CD4-positive, alpha-beta memory T cell (primary cell): ENCODE measurements at regions of chrX and their contacts with region 1.

Region 1: DNA sequence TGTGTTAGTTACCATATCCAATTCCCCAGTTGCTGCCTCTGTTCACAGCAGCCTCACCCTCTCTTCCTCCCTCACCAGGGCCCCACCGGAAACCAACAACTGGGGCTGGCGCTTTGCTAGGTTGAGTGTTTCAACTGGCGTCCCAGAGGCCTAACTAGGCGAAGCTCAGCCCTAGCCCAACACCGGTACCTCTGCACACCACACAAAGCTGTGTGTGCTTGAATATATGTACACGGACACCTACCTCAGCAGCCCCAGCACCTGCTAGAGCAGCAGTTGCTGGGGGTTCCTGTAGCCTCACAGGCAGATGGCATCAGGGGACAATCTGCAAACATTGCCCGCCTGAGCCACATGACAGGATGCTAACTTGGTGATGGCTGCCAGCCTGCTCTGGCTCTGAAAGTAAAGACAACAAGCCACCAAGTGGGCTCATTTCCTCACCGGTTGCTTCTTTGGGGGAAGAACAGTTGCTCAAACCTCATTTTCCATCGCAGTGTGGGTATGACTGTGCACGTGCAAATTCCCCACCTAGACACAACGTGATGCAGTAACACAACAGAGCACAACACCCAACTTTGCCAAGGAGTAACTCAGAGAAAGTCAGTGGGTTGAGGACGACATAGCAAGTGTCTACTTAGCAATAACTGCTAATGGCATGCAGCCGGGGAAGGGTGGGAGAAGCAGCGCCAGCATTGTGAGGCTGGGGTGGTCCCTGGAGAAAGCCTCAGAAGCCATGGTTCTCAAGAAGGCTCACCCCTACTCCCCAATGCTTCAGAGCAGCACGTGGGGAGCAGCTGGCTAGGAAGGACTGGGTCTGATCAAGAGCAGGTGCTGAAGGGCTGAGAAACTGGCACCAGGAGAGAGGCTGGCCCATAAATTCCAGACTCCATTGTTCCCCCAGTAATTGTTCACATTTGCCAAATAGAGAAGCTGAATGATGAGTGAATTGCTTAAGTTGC is 139.5 kb downstream of the SH3KBP1 start:
- DNase-seq: peak; percentile 83 to 89 (median 85)
- H3K4me3 ChIP-seq: peak overlapping the region in 1 of 2 donors; percentile 4
- H3K4me3 Mint-ChIP-seq: peak overlapping the region; percentile 28 to 88 (median 68)
- H3K27ac ChIP-seq: peak overlapping the region; percentile 60
- H3K27ac Mint-ChIP-seq: peak overlapping the region; percentile 85 to 99 (median 97)
- H3K4me1 ChIP-seq: peaks cover 100% of the 10 kb centered on the region
- H3K4me1 Mint-ChIP-seq: peaks cover 63 to 99% (median 86%) of the 10 kb centered on the region in 4 donors
- H3K27me3 ChIP-seq: no peaks in the 10 kb centered on the region
- H3K27me3 Mint-ChIP-seq: no peaks in the 10 kb centered on the region

Region 2: DNA sequence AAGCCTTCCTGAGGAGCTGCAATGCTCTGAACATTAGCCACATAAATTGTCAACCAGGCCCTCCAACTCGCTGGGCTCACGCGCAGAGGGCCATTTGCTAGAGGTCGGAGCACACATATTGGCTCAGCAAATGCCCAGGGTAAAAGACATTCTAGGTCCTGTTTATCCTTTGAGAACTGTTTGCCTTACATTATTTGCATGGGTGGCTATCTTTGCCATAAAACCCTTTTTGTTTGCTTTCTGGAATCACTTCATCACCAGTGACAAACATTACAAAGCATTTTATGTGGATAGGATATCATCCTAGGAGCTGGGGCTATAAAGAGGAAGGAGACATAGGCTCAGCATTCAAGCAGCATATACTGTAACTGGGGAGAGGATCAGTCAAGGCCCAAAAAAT is 1737.7 kb before region 1 on chrX:
- CTCF ChIA-PET with region 1: no interaction called
- POLR2A ChIA-PET with region 1: no interaction called
- intact Hi-C with region 1: no loop called
- DNase-seq: no peak
- H3K4me3 ChIP-seq: no peak overlapping the region
- H3K4me3 Mint-ChIP-seq: no peak overlapping the region
- H3K27ac ChIP-seq: no peak overlapping the region
- H3K27ac Mint-ChIP-seq: no peak overlapping the region
- H3K4me1 ChIP-seq: no peaks in the 10 kb centered on the region
- H3K4me1 Mint-ChIP-seq: no peaks in the 10 kb centered on the region
- H3K27me3 ChIP-seq: no peaks in the 10 kb centered on the region
- H3K27me3 Mint-ChIP-seq: peaks cover 0 to 1% of the 10 kb centered on the region in 2 donors

Region 3: DNA sequence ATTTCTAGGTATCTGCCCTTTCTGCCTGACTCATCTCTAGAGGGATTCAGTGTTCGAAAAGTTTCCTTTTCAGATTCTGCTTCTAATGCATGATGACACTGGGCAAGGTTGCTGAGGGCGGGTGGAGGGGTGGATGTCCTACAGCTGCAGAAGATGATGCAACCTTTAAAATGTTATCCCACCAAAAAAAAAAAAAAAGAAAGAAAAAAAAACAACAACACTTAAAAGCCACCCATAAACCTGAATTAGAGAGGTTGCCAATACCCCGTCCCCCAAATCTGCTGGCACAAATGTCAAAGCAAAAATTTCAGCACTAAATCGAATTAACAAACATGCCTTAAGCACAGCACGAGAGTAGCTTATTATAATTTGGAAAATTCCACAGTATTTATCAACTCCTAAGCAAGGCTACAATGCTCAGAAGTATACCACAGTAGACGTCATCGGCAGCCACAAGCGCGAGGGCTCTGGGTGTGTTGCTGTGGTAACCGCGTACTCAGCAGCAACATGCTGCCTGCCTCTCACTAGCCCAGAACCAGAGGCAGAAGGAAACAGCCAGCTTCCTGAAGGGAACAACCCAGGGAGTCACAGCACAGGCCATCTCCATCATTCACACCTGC is 65.1 kb before region 1 on chrX:
- CTCF ChIA-PET with region 1: no interaction called
- POLR2A ChIA-PET with region 1: interaction called, 7 read pairs
- intact Hi-C with region 1: loop called (anchors 5 kb)
- DNase-seq: peak; percentile 83 to 92 (median 85)
- H3K4me3 ChIP-seq: no peak overlapping the region
- H3K4me3 Mint-ChIP-seq: peak overlapping the region; percentile 12 to 75 (median 59)
- H3K27ac ChIP-seq: peak overlapping the region; percentile 92
- H3K27ac Mint-ChIP-seq: peak overlapping the region; percentile 95 to 100 (median 98)
- H3K4me1 ChIP-seq: peaks cover 89% of the 10 kb centered on the region
- H3K4me1 Mint-ChIP-seq: peaks cover 55 to 84% (median 72%) of the 10 kb centered on the region in 4 donors
- H3K27me3 ChIP-seq: no peaks in the 10 kb centered on the region
- H3K27me3 Mint-ChIP-seq: no peaks in the 10 kb centered on the region

Region 4: GRCh38 chrX:19772826-19773628 is 25.1 kb after region 1 on chrX:
- CTCF ChIA-PET with region 1: interaction called, 7 read pairs
- POLR2A ChIA-PET with region 1: interaction called, 24 read pairs
- intact Hi-C with region 1: loop called (anchors 2 kb)
- DNase-seq: peak in 1 of 5 donors; percentile 51
- H3K4me3 ChIP-seq: no peak overlapping the region
- H3K4me3 Mint-ChIP-seq: peak overlapping the region in 7 of 8 donors; percentile 60 to 86 (median 72)
- H3K27ac ChIP-seq: peak overlapping the region; percentile 58
- H3K27ac Mint-ChIP-seq: peak overlapping the region; percentile 84 to 97 (median 90)
- H3K4me1 ChIP-seq: peaks cover 87% of the 10 kb centered on the region
- H3K4me1 Mint-ChIP-seq: peaks cover 45 to 80% (median 59%) of the 10 kb centered on the region in 4 donors
- H3K27me3 ChIP-seq: no peaks in the 10 kb centered on the region
- H3K27me3 Mint-ChIP-seq: no peaks in the 10 kb centered on the region

Region 5: GRCh38 chrX:19799319-19800182 is 51.6 kb after region 1 on chrX:
- CTCF ChIA-PET with region 1: interaction called, 13 read pairs
- POLR2A ChIA-PET with region 1: interaction called, 109 read pairs
- intact Hi-C with region 1: loop called (anchors 2 kb)
- DNase-seq: peak; percentile 64 to 76 (median 72)
- H3K4me3 ChIP-seq: peak overlapping the region; percentile 55 to 68
- H3K4me3 Mint-ChIP-seq: peak overlapping the region; percentile 90 to 96 (median 93)
- H3K27ac ChIP-seq: peak overlapping the region; percentile 68
- H3K27ac Mint-ChIP-seq: peak overlapping the region; percentile 88 to 98 (median 95)
- H3K4me1 ChIP-seq: peaks cover 67% of the 10 kb centered on the region
- H3K4me1 Mint-ChIP-seq: peaks cover 38 to 81% (median 51%) of the 10 kb centered on the region in 4 donors
- H3K27me3 ChIP-seq: no peaks in the 10 kb centered on the region
- H3K27me3 Mint-ChIP-seq: no peaks in the 10 kb centered on the region

Region 6: GRCh38 chrX:19887911-19888879 is 140.3 kb after region 1 on chrX:
- CTCF ChIA-PET with region 1: interaction called, 9 read pairs
- POLR2A ChIA-PET with region 1: interaction called, 33 read pairs
- intact Hi-C with region 1: loop called (anchors 2 kb)
- DNase-seq: peak; percentile 54 to 63 (median 58)
- H3K4me3 ChIP-seq: peak overlapping the region; percentile 23 to 51
- H3K4me3 Mint-ChIP-seq: peak overlapping the region; percentile 72 to 86 (median 80)
- H3K27ac ChIP-seq: peak overlapping the region; percentile 59
- H3K27ac Mint-ChIP-seq: peak overlapping the region; percentile 77 to 96 (median 89)
- H3K4me1 ChIP-seq: peaks cover 36% of the 10 kb centered on the region
- H3K4me1 Mint-ChIP-seq: peaks cover 24 to 50% (median 35%) of the 10 kb centered on the region in 4 donors
- H3K27me3 ChIP-seq: no peaks in the 10 kb centered on the region
- H3K27me3 Mint-ChIP-seq: no peaks in the 10 kb centered on the region

Region 7: GRCh38 chrX:19924285-19924684 is 176.4 kb after region 1 on chrX:
- CTCF ChIA-PET with region 1: no interaction called
- POLR2A ChIA-PET with region 1: no interaction called
- intact Hi-C with region 1: no loop called
- DNase-seq: no peak
- H3K4me3 ChIP-seq: no peak overlapping the region
- H3K4me3 Mint-ChIP-seq: no peak overlapping the region
- H3K27ac ChIP-seq: no peak overlapping the region
- H3K27ac Mint-ChIP-seq: peak overlapping the region in 3 of 7 donors; percentile 57 to 76 (median 64)
- H3K4me1 ChIP-seq: no peaks in the 10 kb centered on the region
- H3K4me1 Mint-ChIP-seq: peaks cover 0 to 2% (median 0%) of the 10 kb centered on the region in 4 donors
- H3K27me3 ChIP-seq: no peaks in the 10 kb centered on the region
- H3K27me3 Mint-ChIP-seq: no peaks in the 10 kb centered on the region